Colonic mucosa (tissue), 4 donors: ENCODE measurements at regions of chr9 and their contacts with region 1.

Region 1: GRCh38 chr9:114405294-114406034 is 17.7 kb upstream of the AKNA start:
- DNase-seq: peak; percentile 82
- H3K4me3 ChIP-seq: no peak overlapping the region
- H3K27ac ChIP-seq: no peak overlapping the region
- H3K4me1 ChIP-seq: no peaks in the 10 kb centered on the region
- H3K27me3 ChIP-seq: no peaks in the 10 kb centered on the region
- CTCF ChIP-seq: peak; percentile 80

Region 2: GRCh38 chr9:114487607-114488300 is 82.3 kb after region 1 on chr9:
- intact Hi-C with region 1: loop called (anchors 10 kb)
- DNase-seq: peak; percentile 86
- H3K4me3 ChIP-seq: no peak overlapping the region
- H3K27ac ChIP-seq: no peak overlapping the region
- H3K4me1 ChIP-seq: no peaks in the 10 kb centered on the region
- H3K27me3 ChIP-seq: no peaks in the 10 kb centered on the region
- CTCF ChIP-seq: peak; percentile 80

Region 3: GRCh38 chr9:114592356-114592755 is 186.9 kb after region 1 on chr9:
- intact Hi-C with region 1: loop called (anchors 10 kb)
- DNase-seq: no peak
- H3K4me3 ChIP-seq: no peak overlapping the region
- H3K27ac ChIP-seq: peak overlapping the region; percentile 61
- H3K4me1 ChIP-seq: peaks cover 9% of the 10 kb centered on the region
- H3K27me3 ChIP-seq: no peaks in the 10 kb centered on the region
- CTCF ChIP-seq: no peak

Region 4: GRCh38 chr9:114662081-114662989 is 256.9 kb after region 1 on chr9:
- intact Hi-C with region 1: no loop called
- DNase-seq: peak; percentile 63
- H3K4me3 ChIP-seq: no peak overlapping the region
- H3K27ac ChIP-seq: no peak overlapping the region
- H3K4me1 ChIP-seq: no peaks in the 10 kb centered on the region
- H3K27me3 ChIP-seq: no peaks in the 10 kb centered on the region
- CTCF ChIP-seq: peak; percentile 68